ENCODE measurements at regions of chr11 and their contacts with region 1.

Region 1: DNA sequence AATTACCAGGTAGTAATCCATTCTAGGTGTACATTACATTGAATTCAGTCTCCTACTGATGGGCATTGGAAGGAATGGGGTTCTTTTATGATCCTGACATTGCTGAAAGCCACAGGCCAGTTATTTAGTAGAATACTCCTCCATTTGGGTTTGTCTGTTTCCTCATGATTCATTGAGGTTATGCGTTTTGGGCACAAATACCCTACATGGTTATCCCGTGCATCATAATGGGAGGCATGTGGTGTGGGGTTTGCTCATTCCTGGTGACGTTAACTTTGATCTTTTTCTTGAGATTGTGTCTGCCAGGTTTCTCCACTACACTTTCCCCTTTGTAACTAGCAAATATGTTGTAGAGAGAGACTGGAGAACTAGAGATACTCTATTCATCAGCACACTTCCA is 5.5 kb downstream of the FOLR3 start:
- DNase-seq: peak; percentile 69
- H3K4me3 ChIP-seq: no peak overlapping the region
- H3K27ac ChIP-seq: peak overlapping the region; percentile 80
- H3K27me3 ChIP-seq: no peaks in the 10 kb centered on the region
- CTCF ChIP-seq: no peak

Region 2: DNA sequence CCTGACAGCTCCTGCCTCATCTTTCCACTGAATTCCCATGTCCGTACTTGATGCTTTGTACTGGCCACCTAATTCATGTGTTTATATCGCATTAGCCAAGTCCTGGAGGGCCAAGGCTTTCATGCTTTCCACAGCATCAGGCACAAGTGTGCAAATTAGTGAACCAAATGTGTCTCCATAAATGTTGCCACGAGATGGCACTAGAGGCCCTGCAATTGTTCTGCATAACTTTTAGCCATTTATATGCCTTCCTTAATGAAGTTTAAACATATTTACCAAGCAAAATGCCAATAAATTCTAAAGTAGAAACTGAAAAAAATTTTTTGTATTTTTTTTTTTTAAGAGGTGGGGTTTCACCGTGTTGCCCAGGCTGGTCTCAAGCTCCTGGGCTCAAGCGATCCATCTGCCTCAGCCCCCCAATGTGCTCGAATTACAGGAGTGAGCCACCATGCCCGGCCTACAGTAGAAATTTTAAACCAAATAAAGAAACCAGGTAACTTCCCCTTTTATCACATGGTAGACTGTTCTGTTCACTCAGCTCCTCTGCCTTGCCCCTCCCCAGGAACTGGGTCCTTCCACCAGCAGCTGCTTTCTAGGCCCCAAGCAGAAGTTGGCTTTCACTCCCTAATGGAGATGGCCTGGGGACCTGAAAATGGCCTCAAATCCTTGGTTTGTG is 163.2 kb before region 1 on chr11:
- CTCF ChIA-PET with region 1: interaction called, 14 read pairs
- POLR2A ChIA-PET with region 1: no interaction called
- DNase-seq: no peak
- H3K4me3 ChIP-seq: no peak overlapping the region
- H3K27ac ChIP-seq: no peak overlapping the region
- H3K27me3 ChIP-seq: no peaks in the 10 kb centered on the region
- CTCF ChIP-seq: peak; percentile 72

Region 3: DNA sequence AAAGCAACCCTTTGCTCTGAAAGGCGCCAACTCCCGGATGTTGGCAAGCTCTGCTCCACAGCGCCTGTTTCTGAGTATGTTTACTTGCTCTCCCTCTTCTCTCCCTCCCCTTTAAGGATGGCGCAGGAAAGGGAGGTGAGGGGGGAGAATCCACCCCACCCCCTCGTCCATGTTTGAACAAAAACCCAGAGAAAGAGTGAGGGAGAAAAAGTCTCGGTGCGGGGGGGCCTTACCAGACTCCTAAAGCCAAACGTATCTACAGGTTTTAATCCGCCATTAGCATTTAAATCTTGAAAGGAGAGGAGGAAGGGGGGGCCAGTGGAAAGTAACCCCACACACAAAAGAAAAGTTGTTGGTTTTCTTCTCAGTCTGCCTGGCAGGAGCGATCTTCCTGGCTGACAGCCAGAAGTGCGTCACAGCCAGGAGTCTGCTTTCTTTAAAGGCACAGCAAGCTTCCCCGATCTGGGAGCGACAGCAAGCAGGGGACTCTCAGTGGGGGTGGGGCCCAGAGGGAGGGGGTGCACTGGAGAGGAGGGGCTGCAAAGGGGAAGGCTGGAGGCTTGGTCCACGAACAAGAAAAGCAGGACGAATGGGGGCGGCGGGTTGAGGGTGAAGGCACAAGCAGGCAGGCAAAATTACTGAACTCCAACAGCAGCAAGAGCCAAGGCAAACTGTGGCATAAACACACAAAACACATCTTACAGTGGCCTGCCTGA is 100.2 kb before region 1 on chr11:
- CTCF ChIA-PET with region 1: interaction called, 11 read pairs
- POLR2A ChIA-PET with region 1: no interaction called
- DNase-seq: peak; percentile 89
- H3K4me3 ChIP-seq: peak overlapping the region; percentile 88
- H3K27ac ChIP-seq: peak overlapping the region; percentile 99
- H3K27me3 ChIP-seq: no peaks in the 10 kb centered on the region
- CTCF ChIP-seq: no peak

Region 4: GRCh38 chr11:72154816-72155215 is 13.8 kb after region 1 on chr11:
- CTCF ChIA-PET with region 1: interaction called, 24 read pairs
- POLR2A ChIA-PET with region 1: no interaction called
- DNase-seq: no peak
- H3K4me3 ChIP-seq: no peak overlapping the region
- H3K27ac ChIP-seq: no peak overlapping the region
- H3K27me3 ChIP-seq: no peaks in the 10 kb centered on the region
- CTCF ChIP-seq: no peak

Region 5: DNA sequence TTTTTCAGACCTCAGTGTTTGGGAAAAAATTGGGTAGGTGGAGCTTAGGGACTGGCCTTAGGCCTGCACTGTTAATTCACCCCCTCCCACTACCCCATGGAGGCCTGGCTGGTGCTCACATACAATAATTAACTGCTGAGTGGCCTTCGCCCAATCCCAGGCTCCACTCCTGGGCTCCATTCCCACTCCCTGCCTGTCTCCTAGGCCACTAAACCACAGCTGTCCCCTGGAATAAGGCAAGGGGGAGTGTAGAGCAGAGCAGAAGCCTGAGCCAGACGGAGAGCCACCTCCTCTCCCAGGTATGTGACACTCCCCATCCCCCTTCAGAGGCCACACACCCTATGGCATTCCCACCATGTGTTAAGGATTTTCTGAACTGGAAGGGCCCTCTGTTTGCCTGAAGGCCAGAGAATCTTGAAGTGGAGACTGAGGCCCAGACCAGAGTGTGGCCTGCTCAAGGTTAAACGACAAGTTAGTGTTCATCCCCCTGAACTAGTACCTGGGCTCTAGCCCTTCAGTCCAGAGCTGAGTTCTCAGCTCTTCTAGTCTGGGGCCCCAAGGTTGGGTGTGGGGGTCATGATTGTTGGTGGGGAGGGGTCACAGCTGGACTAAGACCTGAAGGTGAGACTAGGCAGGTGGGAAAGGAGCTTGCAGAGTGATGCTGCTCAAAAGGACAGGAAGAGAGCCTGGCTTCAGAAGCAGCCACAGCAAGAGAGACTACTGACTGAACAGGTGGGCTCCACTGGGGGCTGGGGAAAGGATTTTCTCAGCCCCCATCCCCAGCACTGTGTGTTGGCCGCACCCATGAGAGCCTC is 48.6 kb after region 1 on chr11:
- CTCF ChIA-PET with region 1: interaction called, 25 read pairs
- POLR2A ChIA-PET with region 1: interaction called, 3 read pairs
- DNase-seq: no peak
- H3K4me3 ChIP-seq: no peak overlapping the region
- H3K27ac ChIP-seq: no peak overlapping the region
- H3K27me3 ChIP-seq: no peaks in the 10 kb centered on the region
- CTCF ChIP-seq: no peak